PC-9 (cell line): ENCODE measurements at regions of chr7 and their contacts with region 1.

Region 1: DNA sequence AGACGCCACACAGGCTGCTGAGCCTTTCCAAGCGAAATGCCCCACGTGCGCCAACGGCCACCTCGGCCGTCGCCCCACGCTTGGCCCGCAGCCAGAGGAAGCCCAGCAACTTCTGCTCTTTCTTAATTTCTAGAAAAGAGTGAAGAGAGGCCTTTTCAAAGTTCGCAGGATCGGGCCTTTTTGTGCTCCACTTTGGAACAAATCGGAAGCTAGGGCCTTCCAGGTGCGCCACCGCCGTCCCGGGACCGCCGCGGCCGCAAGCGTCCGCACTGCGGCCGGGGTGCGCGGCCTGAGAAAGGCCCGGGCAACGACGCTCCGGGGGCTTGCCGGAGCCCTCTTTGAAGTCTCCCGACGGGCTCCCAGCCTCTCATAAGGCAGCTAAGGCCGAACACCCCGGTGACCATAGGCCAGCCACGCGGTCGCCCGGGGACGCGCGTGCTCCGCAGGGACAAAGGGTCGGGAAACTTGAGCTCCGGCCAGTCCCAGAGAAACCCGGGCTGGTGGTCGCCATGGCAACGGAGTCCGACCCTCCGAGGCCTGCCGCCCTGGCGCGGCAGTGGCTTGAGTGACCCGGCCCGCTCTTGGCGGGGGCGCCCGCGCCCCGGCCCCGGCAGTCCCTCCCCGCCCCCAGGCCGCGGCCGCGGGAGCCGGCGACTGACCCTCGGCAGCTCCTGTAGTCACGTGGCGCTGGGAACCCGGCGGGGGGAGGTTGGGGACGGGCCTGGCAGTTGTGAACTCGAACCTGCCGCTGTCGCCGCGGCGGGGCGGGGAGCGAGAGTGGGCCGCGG is at the start of gene REPIN1:
- DNase-seq: peak; percentile 90 to 93
- H3K4me3 ChIP-seq: peak within 1 kb of the TSS; percentile 94
- H3K27ac ChIP-seq: peak within 1 kb of the TSS; percentile 97
- H3K4me1 ChIP-seq: peaks cover 37% of the 10 kb centered on the region
- H3K27me3 ChIP-seq: no peaks in the 10 kb centered on the region
- CTCF ChIP-seq: no peak
- total RNA-seq, gene REPIN1: 172 and 174 TPM in 2 replicates

Region 2: DNA sequence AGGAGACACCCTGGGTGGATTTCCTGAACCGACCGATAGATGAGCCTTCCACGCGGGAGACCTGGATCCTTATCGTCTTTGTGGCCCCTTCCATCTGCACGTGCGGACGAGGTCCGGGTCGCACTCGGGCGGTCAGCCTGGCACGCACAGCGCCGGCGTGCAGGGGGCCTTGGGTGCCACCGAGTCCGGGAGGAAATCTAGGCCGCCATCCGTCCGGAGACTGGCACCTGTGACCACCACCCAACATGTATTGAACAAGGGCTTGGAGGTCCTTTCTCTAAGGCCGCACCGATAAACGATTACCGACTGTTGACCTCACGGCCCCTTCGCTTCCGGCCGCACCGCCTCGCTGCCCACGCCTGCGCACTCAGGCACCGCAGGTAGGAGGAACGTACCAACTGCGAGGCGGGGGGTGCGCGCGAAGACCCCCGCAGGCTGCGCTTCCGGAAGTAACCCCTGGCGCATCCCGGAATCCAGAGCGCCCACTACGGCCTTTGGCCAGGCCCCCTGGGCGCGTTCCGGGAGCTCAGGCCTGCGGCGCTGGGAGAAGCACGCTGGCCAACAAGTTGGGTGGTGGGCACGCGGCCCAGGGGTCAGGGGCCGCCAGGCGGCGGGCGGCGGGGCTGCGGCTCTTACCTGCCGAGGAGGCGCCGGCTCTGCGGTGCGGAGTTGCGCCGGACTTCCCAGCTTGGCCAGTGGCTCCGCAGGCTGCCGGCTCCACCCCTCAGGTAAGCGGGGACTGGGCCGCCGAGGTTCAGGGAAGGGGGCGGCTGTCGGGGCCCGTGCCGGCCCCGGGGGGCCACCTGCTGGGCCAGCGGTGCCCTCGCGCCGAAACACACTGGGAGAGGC is 45.2 kb before region 1 on chr7 and contains the starts of genes ACTR3C and LRRC61:
- CTCF ChIA-PET with region 1: no interaction called
- POLR2A ChIA-PET with region 1: no interaction called
- intact Hi-C with region 1: loop called (anchors 2 kb)
- DNase-seq: peak; percentile 69 to 73
- H3K4me3 ChIP-seq: peak within 1 kb of the TSS; percentile 98
- H3K27ac ChIP-seq: peak within 1 kb of the TSS; percentile 83
- H3K4me1 ChIP-seq: peaks cover 54% of the 10 kb centered on the region
- H3K27me3 ChIP-seq: no peaks in the 10 kb centered on the region
- CTCF ChIP-seq: peak; percentile 42; the same call in 1 of the 2 replicates
- total RNA-seq, gene ACTR3C: 24.1 and 34.5 TPM in 2 replicates
- total RNA-seq, gene LRRC61: 34.8 and 42.3 TPM in 2 replicates

Region 3: GRCh38 chr7:150378853-150379440 is 10.7 kb after region 1 on chr7 and contains the start of gene ZNF775:
- CTCF ChIA-PET with region 1: no interaction called
- POLR2A ChIA-PET with region 1: interaction called, 8 read pairs
- intact Hi-C with region 1: loop called (anchors 1 kb)
- DNase-seq: peak; percentile 89 to 99
- H3K4me3 ChIP-seq: peak within 1 kb of the TSS; percentile 89
- H3K27ac ChIP-seq: peak within 1 kb of the TSS; percentile 31
- H3K4me1 ChIP-seq: peaks cover 20% of the 10 kb centered on the region
- H3K27me3 ChIP-seq: no peaks in the 10 kb centered on the region
- CTCF ChIP-seq: no peak
- total RNA-seq, gene ZNF775: 3.1 and 3.4 TPM in 2 replicates